ENCODE measurements at regions of chr1 and their contacts with region 1.

Region 1: GRCh38 chr1:53278201-53278725 is 39.9 kb upstream of the MAGOH start:
- DNase-seq: peak; percentile 73
- ATAC-seq: peak; percentile 90
- H3K4me3 ChIP-seq: no peak overlapping the region
- H3K4me3 Mint-ChIP-seq: no peak overlapping the region
- H3K27ac ChIP-seq: no peak overlapping the region
- H3K27ac Mint-ChIP-seq: no peak overlapping the region
- H3K4me1 ChIP-seq: no peaks in the 10 kb centered on the region
- H3K4me1 Mint-ChIP-seq: no peaks in the 10 kb centered on the region
- H3K27me3 ChIP-seq: no peaks in the 10 kb centered on the region
- H3K27me3 Mint-ChIP-seq: no peaks in the 10 kb centered on the region
- CTCF ChIP-seq: peak; percentile 96

Region 2: GRCh38 chr1:53296117-53296749 is 18.0 kb after region 1 on chr1:
- CTCF ChIA-PET with region 1: interaction called, 19 read pairs
- POLR2A ChIA-PET with region 1: no interaction called
- intact Hi-C with region 1: no loop called
- DNase-seq: no peak
- ATAC-seq: no peak
- H3K4me3 ChIP-seq: no peak overlapping the region
- H3K4me3 Mint-ChIP-seq: no peak overlapping the region
- H3K27ac ChIP-seq: no peak overlapping the region
- H3K27ac Mint-ChIP-seq: no peak overlapping the region
- H3K4me1 ChIP-seq: peaks cover 13 to 20% of the 10 kb centered on the region in 2 donors
- H3K4me1 Mint-ChIP-seq: peaks cover 16% of the 10 kb centered on the region
- H3K27me3 ChIP-seq: no peaks in the 10 kb centered on the region
- H3K27me3 Mint-ChIP-seq: no peaks in the 10 kb centered on the region
- CTCF ChIP-seq: no peak

Region 3: DNA sequence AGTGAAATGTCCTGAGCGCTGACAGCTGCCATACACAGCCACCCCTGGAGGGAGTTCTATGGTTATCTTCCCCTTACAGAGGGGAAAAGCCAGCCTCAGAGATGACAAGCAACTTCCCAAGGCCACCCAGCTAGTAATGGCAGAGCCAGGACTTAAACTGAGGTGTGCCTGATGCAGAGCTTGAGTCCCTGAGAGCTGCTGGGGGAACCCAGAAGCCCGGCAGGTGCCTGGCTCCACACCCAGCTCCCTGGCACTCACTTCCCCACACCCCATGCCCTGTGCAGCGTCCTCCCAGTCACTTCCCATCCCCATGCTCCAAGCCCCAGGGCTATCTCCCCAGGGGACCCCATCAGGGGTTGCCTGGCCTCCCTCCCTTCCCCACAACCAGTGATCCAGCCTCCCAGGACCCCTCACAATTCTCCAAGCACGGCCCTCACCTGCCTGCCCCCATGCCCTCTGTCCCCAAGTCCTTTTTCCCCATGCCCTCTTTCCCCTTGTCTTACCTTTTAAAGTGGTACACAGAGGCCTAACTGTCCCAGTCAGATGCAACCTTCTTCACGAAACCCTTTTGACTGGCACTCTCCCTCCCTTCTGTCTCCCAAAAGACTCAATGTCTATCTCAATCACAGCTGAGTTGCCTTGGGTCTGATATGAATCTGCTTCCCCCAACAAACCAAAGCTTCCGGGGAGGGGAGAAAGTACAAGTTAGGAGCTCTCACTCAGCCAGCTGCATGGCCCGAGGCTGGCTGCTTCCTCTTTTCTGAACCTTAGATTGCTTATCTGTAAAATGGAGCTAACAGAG is 89.4 kb after region 1 on chr1:
- CTCF ChIA-PET with region 1: interaction called, 13 read pairs
- POLR2A ChIA-PET with region 1: no interaction called
- intact Hi-C with region 1: no loop called
- DNase-seq: peak; percentile 73
- ATAC-seq: peak; percentile 88
- H3K4me3 ChIP-seq: peak overlapping the region; percentile 19 to 75 (median 59)
- H3K4me3 Mint-ChIP-seq: peak overlapping the region; percentile 98
- H3K27ac ChIP-seq: peak overlapping the region; percentile 42 to 85
- H3K27ac Mint-ChIP-seq: peak overlapping the region; percentile 97
- H3K4me1 ChIP-seq: peaks cover 30 to 43% of the 10 kb centered on the region in 2 donors
- H3K4me1 Mint-ChIP-seq: peaks cover 45% of the 10 kb centered on the region
- H3K27me3 ChIP-seq: no peaks in the 10 kb centered on the region
- H3K27me3 Mint-ChIP-seq: no peaks in the 10 kb centered on the region
- CTCF ChIP-seq: no peak

Region 4: DNA sequence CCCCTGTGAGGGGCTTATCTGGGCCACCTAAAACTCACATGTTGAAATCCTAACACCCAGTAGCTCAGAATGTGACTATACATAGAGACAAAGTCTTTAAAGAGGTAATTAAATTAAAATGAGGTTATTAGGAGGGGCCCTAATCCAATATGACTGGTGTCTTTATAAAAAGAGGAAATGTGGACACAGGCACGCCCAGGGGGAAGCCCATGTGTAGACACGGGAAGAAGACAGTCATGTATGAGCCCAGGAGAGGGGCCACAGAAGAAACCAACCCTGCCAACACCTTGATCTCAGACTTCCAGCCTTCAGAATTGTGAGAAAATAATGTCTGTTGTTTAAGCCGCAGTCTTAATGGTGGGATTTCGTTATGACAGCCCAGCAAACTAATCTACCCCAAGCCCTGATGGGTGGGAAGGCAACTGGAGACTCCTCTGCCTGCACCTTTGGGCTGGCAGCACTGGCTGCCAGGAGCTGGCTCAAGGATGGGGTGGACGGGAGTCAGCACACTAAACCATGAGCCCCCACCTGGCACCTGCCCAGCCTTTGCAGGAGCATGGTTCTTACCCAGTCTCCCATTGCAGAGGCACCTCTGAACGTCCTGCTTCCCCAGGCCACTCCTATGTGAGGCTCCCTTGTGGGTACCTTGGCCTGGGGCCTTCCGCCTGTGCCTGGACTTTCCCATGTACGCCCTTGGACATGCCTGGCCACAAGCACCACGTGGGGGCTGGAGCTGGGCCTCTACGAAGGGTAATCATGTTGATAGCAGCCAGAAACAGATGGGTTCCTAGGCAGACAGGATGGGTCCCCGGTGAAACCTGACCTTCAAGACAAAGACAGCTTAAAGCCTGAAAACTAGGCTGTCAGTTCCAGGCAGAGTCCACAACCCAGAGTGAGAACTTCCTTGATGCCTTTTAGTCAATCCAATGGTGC is 123.8 kb after region 1 on chr1:
- CTCF ChIA-PET with region 1: interaction called, 350 read pairs
- POLR2A ChIA-PET with region 1: no interaction called
- intact Hi-C with region 1: no loop called
- DNase-seq: no peak
- ATAC-seq: no peak
- H3K4me3 ChIP-seq: no peak overlapping the region
- H3K4me3 Mint-ChIP-seq: no peak overlapping the region
- H3K27ac ChIP-seq: no peak overlapping the region
- H3K27ac Mint-ChIP-seq: no peak overlapping the region
- H3K4me1 ChIP-seq: no peaks in the 10 kb centered on the region
- H3K4me1 Mint-ChIP-seq: no peaks in the 10 kb centered on the region
- H3K27me3 ChIP-seq: peaks cover 0 to 11% (median 0%) of the 10 kb centered on the region in 4 experiments
- H3K27me3 Mint-ChIP-seq: peaks cover 25% of the 10 kb centered on the region
- CTCF ChIP-seq: no peak